Tibial artery (tissue), 4 donors: ENCODE measurements at regions of chr5 and their contacts with region 1.

Region 1: GRCh38 chr5:4737868-4738267 is 402.3 kb upstream of the ADAMTS16 start:
- DNase-seq: no peak
- H3K4me3 ChIP-seq: no peak overlapping the region
- H3K27ac ChIP-seq: no peak overlapping the region
- H3K4me1 ChIP-seq: no peaks in the 10 kb centered on the region
- H3K27me3 ChIP-seq: no peaks in the 10 kb centered on the region
- CTCF ChIP-seq: no peak

Region 2: DNA sequence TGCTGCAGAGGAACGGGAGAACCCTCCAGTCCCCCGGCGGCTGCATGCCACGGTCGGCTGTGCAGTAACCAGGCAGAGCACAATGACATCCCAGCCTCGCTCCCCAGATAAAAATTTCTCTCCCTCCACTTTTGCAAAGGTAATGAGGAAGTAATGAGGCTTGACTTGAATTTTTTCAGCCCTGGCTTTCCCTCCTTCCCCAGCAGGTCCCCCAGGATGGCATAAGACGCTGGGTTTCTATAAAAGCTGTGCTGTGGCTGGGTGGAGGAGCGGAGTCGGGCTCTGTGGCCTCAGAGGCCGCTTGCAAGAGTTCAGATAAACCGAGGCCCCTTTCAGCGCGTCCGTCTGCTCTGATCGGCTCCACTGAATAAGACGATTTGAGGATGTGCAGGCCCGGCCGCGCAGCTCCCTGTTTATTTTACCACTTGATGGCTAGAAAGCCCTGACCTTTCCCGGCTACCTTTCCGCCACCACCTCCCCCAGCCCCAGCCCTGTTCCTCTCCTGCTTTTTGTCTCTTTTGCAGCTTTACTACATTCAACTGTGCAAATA is 1634.5 kb before region 1 on chr5:
- intact Hi-C with region 1: loop called (anchors 10 kb)
- DNase-seq: no peak
- H3K4me3 ChIP-seq: no peak overlapping the region
- H3K27ac ChIP-seq: no peak overlapping the region
- H3K4me1 ChIP-seq: no peaks in the 10 kb centered on the region
- H3K27me3 ChIP-seq: peaks cover 0 to 32% of the 10 kb centered on the region in 2 donors
- CTCF ChIP-seq: no peak